WTC11 (cell line): ENCODE measurements at regions of chr16 and their contacts with region 1.

Region 1: GRCh38 chr16:50371936-50372595 is 3.3 kb upstream of the BRD7 start:
- DNase-seq: peak; percentile 57
- ATAC-seq: peak; percentile 53
- H3K4me3 Mint-ChIP-seq: no peak overlapping the region; the same call in 1 of the 2 replicates
- H3K27ac Mint-ChIP-seq: no peak overlapping the region; the same call in 1 of the 2 replicates
- H3K4me1 Mint-ChIP-seq: peaks cover 20% of the 10 kb centered on the region
- H3K27me3 Mint-ChIP-seq: no peaks in the 10 kb centered on the region
- CTCF ChIP-seq: no peak

Region 2: DNA sequence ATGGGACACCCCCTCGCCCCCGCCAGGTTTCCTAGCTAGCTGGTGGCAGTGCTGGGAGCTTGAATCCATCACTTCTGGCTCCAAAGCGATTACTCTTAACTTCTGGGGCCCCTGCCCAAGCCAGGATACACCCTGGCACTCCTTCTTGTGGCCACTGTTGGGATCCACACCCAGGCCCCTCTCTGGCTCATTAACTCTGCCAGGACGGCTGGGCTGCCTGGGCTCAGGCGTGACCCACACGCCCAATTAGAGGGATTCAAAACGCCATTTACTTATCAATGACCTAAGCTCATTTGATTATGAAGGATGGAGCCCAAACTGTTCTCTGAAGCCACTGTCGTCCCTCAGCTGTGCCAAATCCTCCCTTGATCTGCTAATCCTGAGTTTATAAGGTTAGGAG is 76.4 kb after region 1 on chr16:
- CTCF ChIA-PET with region 1: interaction called, 11 read pairs
- POLR2A ChIA-PET with region 1: no interaction called
- DNase-seq: peak; percentile 50
- ATAC-seq: peak; percentile 95
- H3K4me3 Mint-ChIP-seq: no peak overlapping the region
- H3K27ac Mint-ChIP-seq: 0 out of 2 replicates have a peak overlapping the region, but pooled peaks have one; percentile 15
- H3K4me1 Mint-ChIP-seq: peaks cover 52% of the 10 kb centered on the region
- H3K27me3 Mint-ChIP-seq: peaks cover 4% of the 10 kb centered on the region
- CTCF ChIP-seq: peak; percentile 23; the same call in 1 of the 2 replicates

Region 3: GRCh38 chr16:50539822-50540710 is 168.0 kb after region 1 on chr16:
- CTCF ChIA-PET with region 1: interaction called, 11 read pairs
- POLR2A ChIA-PET with region 1: no interaction called
- DNase-seq: peak; percentile 39
- ATAC-seq: peak; percentile 43
- H3K4me3 Mint-ChIP-seq: no peak overlapping the region
- H3K27ac Mint-ChIP-seq: no peak overlapping the region
- H3K4me1 Mint-ChIP-seq: peaks cover 28% of the 10 kb centered on the region
- H3K27me3 Mint-ChIP-seq: peaks cover 10% of the 10 kb centered on the region
- CTCF ChIP-seq: no peak